ENCODE measurements at regions of chr2 and their contacts with region 1.

Region 1: DNA sequence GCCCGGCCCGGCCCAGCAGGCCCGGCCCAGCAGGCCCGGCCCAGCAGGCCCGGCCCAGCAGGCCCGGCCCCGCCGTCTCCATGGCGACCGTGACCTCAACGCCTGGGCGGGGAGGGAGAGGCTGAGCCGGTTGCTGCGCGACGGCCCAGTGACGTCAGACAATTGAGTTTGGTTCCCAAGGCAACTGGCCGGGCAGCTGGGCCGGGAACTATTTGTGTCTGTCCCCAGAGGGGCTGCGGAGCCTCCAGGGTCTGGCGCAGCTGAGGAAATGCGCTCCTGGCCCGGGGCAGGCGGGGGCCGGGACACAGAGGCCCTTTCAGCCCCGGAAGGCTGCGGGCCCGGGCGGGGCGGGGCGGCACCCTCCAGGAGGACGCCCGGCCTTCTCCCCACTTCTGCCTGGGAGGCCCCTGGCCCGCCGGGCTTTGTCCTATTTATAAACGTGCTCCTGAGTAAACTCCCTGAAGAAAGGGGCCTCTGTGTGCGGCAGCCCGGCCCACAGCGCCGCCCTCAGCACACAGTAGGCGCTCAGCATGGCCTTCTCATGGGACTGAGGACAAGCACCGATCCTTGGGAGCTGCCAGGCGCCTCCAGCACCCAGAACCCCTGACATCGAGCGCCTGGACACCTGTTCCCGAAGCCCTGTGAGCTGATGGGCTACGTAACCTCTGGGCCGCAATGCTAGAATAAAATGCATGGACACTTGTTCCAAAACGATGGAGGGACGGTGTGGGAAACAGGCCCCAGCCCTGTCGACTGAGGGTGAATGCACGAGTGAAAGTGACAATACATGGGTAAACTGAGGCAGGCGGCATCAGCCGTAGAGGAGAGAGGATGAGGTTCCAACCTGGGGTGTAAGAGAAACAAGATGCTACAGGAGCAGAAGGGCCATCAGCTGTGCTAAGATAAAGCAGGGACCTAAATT is 12.3 kb downstream of the TEX44 start:
- DNase-seq: peak; percentile 96
- ATAC-seq: peak; percentile 87
- H3K4me3 Mint-ChIP-seq: peak overlapping the region; percentile 42
- H3K27ac Mint-ChIP-seq: peak overlapping the region; percentile 2
- H3K4me1 Mint-ChIP-seq: peaks cover 19% of the 10 kb centered on the region
- H3K27me3 Mint-ChIP-seq: peaks cover 9% of the 10 kb centered on the region

Region 2: DNA sequence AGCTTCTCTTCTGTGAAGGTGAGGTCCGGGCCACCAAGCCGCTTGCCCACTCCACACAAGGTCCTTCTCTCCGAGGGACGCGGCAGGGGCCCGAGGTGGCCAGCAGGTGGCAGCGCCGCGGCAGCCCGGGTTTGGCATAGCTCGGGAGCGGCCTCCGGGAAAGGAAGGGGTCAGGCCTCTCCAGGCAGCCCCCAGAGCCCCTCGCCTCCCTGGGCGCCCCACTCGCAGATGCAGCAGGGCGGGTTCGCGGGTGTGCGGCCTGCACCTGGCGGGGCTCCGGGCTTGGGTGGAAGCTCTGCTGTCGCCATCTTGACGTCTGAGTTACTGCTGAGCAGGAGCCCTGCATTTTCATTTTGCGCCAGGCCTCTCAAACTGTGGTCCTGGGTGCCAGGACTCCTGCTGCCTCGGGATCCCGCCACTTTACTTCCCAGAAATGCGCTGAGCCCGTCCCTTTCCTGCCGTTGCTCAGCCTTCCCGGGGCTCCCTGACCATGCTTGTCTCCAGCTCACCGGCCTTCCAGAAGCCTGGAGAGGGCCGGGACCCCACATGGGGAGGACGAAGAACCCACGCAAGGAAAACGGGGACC is 122.0 kb before region 1 on chr2:
- CTCF ChIA-PET with region 1: interaction called, 30 read pairs
- POLR2A ChIA-PET with region 1: interaction called, 3 read pairs
- DNase-seq: peak; percentile 77
- ATAC-seq: peak; percentile 90
- H3K4me3 Mint-ChIP-seq: peak overlapping the region; percentile 75
- H3K27ac Mint-ChIP-seq: peak overlapping the region; percentile 88
- H3K4me1 Mint-ChIP-seq: peaks cover 20% of the 10 kb centered on the region
- H3K27me3 Mint-ChIP-seq: peaks cover 5% of the 10 kb centered on the region

Region 3: DNA sequence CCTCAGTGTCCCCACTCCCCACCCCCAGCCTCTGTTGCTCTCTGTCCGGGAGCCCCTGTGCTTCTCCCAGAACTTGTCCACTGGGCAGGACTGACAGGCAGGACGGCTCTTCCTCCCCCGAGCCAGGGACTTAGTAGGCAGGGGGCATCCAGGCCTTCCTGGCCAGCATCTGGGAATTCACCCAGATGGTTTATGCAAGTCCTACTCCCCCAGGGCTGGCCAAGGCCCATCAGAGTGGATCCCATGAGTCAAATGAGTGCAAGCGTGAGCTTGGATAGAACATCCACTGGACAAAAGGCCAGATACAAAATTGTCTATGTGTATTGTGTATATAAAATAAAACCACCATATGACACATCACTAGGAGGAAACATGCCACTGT is 82.2 kb before region 1 on chr2:
- CTCF ChIA-PET with region 1: interaction called, 33 read pairs
- POLR2A ChIA-PET with region 1: no interaction called
- DNase-seq: no peak
- ATAC-seq: no peak
- H3K4me3 Mint-ChIP-seq: no peak overlapping the region
- H3K27ac Mint-ChIP-seq: no peak overlapping the region
- H3K4me1 Mint-ChIP-seq: peaks cover 60% of the 10 kb centered on the region
- H3K27me3 Mint-ChIP-seq: peaks cover 48% of the 10 kb centered on the region

Region 4: DNA sequence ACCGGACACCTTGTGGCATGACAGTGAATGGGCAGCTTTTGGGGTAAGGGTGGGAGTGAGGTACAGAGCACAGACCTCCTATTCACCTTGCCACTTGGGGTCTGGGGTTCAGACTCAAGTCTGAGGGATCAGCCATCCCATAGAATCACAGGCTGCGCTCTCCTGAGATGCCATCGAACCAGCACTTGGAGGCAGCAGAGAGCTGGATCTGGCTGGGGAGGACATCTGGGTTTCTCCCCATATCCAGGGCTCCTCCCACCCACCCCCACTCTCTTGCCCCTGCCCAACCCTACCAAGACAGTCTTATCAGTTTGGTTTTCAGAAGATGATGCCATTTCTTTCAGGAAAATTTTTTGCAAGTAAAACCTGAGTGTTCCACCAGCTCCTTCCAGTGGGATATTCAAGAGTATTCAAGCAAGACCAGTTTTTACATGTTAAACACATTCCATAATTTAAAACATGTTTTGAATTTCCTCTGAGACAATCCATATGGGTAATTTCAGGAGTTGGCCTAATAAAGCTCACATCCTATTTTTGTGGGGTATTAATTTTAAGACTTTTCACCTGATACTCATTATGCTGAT is 41.5 kb before region 1 on chr2:
- CTCF ChIA-PET with region 1: interaction called, 46 read pairs
- POLR2A ChIA-PET with region 1: no interaction called
- DNase-seq: peak; percentile 41
- ATAC-seq: peak; percentile 68
- H3K4me3 Mint-ChIP-seq: no peak overlapping the region
- H3K27ac Mint-ChIP-seq: no peak overlapping the region
- H3K4me1 Mint-ChIP-seq: peaks cover 2% of the 10 kb centered on the region
- H3K27me3 Mint-ChIP-seq: peaks cover 1% of the 10 kb centered on the region

Region 5: GRCh38 chr2:231590619-231591018 is 14.3 kb before region 1 on chr2:
- CTCF ChIA-PET with region 1: interaction called, 36 read pairs
- POLR2A ChIA-PET with region 1: no interaction called
- DNase-seq: no peak
- ATAC-seq: no peak
- H3K4me3 Mint-ChIP-seq: no peak overlapping the region
- H3K27ac Mint-ChIP-seq: no peak overlapping the region
- H3K4me1 Mint-ChIP-seq: no peaks in the 10 kb centered on the region
- H3K27me3 Mint-ChIP-seq: no peaks in the 10 kb centered on the region

Region 6: GRCh38 chr2:231706731-231707624 is 102.0 kb after region 1 on chr2:
- CTCF ChIA-PET with region 1: interaction called, 267 read pairs
- POLR2A ChIA-PET with region 1: interaction called, 75 read pairs
- DNase-seq: peak; percentile 98
- ATAC-seq: peak; percentile 38
- H3K4me3 Mint-ChIP-seq: peak overlapping the region; percentile 97
- H3K27ac Mint-ChIP-seq: peak overlapping the region; percentile 100
- H3K4me1 Mint-ChIP-seq: peaks cover 22% of the 10 kb centered on the region
- H3K27me3 Mint-ChIP-seq: no peaks in the 10 kb centered on the region

Measured in activated CD8-positive, alpha-beta T cell treated with anti-CD3 and anti-CD28 coated beads, Interleukin-2, amount 10 ng/mL, durations not matched to agents 7 days and 5 days (primary cell).